ENCODE measurements at regions of chr11 and their contacts with region 1.

Region 1: DNA sequence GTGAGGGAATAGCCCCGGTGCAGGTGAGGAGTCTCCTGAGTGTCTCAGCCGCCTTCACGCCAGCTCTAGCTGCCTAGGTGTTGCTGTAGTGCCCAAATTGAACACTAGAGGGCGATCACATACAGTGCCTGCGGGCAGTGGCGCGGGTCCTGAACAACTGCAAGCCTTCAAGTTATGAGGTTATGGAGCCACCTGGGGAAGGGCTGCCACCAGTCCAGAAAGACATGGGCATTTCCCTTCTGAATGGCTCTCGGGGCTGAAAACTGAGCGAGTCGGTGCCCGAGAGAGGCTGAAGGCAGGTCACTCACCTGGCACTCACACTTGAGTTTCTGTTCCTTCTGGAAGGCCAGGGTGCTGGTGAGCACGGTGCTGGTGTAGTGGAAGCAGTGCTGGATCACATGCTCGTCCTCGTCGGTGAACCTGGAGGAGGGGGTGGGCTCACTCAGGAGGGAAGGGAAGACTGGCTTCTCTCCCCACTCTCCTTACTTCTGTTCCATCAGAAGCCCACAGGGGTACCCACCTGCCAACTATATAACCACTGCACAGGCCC is 88.4 kb downstream of the PDE2A start:
- DNase-seq: peak; percentile 77
- H3K4me3 ChIP-seq: no peak overlapping the region
- H3K27ac ChIP-seq: no peak overlapping the region
- H3K4me1 ChIP-seq: no peaks in the 10 kb centered on the region
- H3K27me3 ChIP-seq: peaks cover 37% of the 10 kb centered on the region
- CTCF ChIP-seq: peak; percentile 98

Region 2: GRCh38 chr11:72573072-72573854 is 12.6 kb before region 1 on chr11:
- CTCF ChIA-PET with region 1: no interaction called
- POLR2A ChIA-PET with region 1: no interaction called
- intact Hi-C with region 1: no loop called
- DNase-seq: peak; percentile 42
- H3K4me3 ChIP-seq: no peak overlapping the region
- H3K27ac ChIP-seq: no peak overlapping the region
- H3K4me1 ChIP-seq: no peaks in the 10 kb centered on the region
- H3K27me3 ChIP-seq: no peaks in the 10 kb centered on the region
- CTCF ChIP-seq: peak; percentile 60

Region 3: GRCh38 chr11:72642884-72643511 is 57.2 kb after region 1 on chr11:
- CTCF ChIA-PET with region 1: interaction called, 4 read pairs
- POLR2A ChIA-PET with region 1: no interaction called
- intact Hi-C with region 1: loop called (anchors 1 kb)
- DNase-seq: peak; percentile 70
- H3K4me3 ChIP-seq: peak overlapping the region; percentile 37
- H3K27ac ChIP-seq: no peak overlapping the region
- H3K4me1 ChIP-seq: peaks cover 8% of the 10 kb centered on the region
- H3K27me3 ChIP-seq: peaks cover 21% of the 10 kb centered on the region
- CTCF ChIP-seq: peak; percentile 97

Region 4: DNA sequence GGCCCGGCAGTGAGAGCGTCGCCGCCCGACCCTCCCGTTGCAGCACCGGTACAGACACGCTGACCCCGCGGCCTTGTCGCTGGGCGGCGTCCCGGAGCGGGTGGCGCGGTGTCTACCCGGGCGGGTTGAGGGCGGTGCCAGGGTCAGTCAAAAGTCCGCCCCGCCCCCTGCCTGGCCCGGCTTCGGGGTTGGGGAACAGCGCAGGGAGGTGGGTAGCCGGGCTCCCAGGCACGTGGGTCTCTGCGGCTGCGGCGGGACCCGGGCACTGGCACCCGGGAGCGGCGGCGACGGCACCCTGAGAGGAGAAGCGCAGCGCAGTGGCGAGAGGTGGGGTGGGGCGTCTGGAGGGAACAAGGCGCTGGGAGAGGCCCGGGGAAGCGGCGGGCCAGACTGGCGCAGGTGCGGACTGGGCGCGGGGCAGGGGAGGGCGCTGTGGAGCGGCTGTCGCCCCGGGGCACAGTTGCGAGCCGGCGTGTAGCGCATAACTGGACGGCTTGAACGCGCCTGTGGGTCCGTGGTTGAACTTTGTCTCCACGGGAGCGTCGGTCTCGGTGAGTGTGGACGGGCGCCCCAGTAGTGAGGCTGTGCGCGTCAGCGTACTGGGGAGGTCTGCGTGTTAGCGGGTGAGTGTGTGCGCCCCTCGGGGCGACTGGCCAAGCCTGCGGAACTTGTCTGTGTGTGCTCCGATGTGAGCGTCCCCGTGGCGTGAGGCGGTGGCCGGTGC is 632.4 kb after region 1 on chr11 and contains the start of gene P2RY2:
- CTCF ChIA-PET with region 1: no interaction called
- POLR2A ChIA-PET with region 1: no interaction called
- intact Hi-C with region 1: no loop called
- DNase-seq: peak; percentile 51
- H3K4me3 ChIP-seq: peak within 1 kb of the TSS; percentile 41
- H3K27ac ChIP-seq: no peak within 1 kb of the TSS
- H3K4me1 ChIP-seq: peaks cover 7% of the 10 kb centered on the region
- H3K27me3 ChIP-seq: peaks cover 3% of the 10 kb centered on the region
- CTCF ChIP-seq: peak; percentile 69
- total RNA-seq, gene P2RY2: not detected in 2 replicates

Region 5: DNA sequence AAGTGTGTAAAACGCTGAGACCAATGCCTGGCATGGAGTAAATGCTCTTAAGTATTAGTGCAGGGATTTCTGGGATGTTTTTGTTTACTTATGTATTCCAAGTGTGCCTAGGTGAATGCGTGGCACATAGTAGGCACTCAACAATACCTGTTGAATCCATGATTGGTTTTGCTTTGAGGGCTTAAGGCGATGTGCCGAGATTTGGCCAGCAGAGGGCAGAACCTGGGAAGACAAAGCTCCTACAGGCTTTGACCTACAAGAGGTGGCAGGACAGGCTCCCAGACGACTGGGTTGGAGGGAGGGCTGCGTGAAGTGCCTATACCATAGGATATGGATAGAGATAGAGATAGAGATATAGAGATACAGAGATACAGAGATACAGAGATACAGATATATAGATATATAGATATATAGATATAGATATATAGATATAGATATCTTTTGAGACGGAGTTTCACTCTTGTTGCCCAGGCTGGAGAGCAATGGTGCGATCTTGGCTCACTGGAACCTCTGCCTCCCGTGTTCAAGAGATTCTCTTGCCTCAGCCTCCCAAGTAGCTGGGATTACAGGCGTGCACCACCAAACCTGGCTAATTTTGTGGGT is 1867.6 kb after region 1 on chr11:
- CTCF ChIA-PET with region 1: no interaction called
- POLR2A ChIA-PET with region 1: no interaction called
- intact Hi-C with region 1: no loop called
- DNase-seq: peak; percentile 85
- H3K4me3 ChIP-seq: no peak overlapping the region
- H3K27ac ChIP-seq: no peak overlapping the region
- H3K4me1 ChIP-seq: peaks cover 13% of the 10 kb centered on the region
- H3K27me3 ChIP-seq: no peaks in the 10 kb centered on the region
- CTCF ChIP-seq: peak; percentile 95